ENCODE measurements at regions of chr12 and their contacts with region 1.

Region 1: DNA sequence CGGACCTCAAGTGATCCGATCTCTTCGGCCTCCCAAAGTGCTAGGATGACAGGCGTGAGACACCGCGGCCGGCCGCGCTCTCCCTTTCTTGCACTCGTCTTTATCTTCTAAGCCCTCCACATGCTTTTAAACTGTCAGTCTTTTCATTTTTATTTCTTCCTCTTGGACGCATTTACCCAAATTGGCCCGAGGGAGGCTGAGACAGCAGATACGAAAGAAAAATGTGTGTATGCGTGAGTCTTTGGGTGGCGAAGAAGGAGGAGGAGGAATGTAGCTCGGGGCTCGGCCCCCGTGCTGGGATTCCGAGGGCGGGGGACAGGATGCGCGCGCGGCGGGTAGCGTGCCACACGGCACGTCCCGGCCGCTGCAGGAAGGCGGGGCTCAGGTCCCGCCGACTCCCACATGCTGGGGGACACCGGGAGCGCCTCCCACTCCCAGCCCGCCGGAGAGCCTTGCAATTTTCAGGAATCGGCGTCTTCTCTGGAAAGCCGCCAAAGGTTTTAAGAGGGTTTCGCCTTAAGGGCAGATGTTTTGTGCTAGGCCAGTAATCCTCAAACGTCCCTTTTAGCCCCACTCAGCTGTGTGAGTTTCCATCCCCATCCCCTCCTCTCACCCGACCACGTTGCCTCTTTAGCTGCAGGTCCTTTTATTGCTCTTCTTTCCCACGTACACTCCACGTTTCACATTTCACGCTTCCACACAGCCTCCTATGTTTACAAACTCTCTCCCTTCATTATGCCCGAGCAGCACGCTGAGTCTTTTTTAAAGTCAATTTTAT is 34.7 kb upstream of the SLC2A3 start:
- DNase-seq: peak; percentile 92
- H3K4me3 Mint-ChIP-seq: peak overlapping the region; percentile 79
- H3K27ac Mint-ChIP-seq: peak overlapping the region; percentile 97
- H3K4me1 Mint-ChIP-seq: peaks cover 32% of the 10 kb centered on the region
- H3K27me3 Mint-ChIP-seq: no peaks in the 10 kb centered on the region

Region 2: DNA sequence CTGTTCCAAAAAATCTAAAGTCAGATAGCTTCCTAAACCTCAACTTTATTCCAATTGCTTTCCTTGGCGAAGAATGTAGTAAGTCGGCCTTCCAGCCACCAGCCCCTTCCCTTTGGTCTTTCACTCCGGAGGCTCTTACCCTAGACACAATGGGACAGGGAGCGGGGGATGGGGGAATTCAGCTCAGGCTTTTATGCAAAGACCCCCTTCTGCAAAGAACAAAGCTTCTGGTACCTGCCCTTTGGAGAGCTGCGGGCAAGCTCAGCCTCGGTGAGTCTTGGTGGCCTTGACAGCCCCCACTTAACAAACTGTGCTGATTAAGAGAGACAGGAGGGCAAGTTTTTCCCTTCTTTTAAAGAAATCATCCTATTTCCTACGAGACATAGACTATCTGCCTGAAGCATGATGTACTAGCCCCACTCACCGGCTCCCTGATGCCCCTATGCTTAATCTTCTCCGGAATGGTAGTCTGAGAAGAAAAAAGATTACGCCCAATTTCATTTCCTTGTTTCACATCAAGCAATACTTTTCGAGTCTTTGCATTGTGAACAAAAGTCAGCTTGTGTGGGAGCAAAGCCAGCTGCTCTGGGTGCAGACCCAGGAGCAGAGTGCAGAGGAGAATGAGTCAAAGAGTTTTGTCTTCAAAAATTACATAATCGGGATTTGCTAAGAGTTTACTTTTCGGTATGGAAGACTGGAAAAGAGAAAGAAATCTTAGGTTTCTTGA is 182.9 kb before region 1 on chr12:
- CTCF ChIA-PET with region 1: no interaction called
- intact Hi-C with region 1: no loop called
- DNase-seq: no peak
- H3K4me3 Mint-ChIP-seq: no peak overlapping the region
- H3K27ac Mint-ChIP-seq: no peak overlapping the region
- H3K4me1 Mint-ChIP-seq: no peaks in the 10 kb centered on the region
- H3K27me3 Mint-ChIP-seq: peaks cover 2% of the 10 kb centered on the region

Region 3: GRCh38 chr12:7959701-7960121 is 11.0 kb before region 1 on chr12:
- CTCF ChIA-PET with region 1: interaction called, 24 read pairs
- intact Hi-C with region 1: loop called (anchors 1 kb)
- DNase-seq: peak; percentile 68
- H3K4me3 Mint-ChIP-seq: peak overlapping the region; percentile 86
- H3K27ac Mint-ChIP-seq: peak overlapping the region; percentile 93
- H3K4me1 Mint-ChIP-seq: peaks cover 37% of the 10 kb centered on the region
- H3K27me3 Mint-ChIP-seq: no peaks in the 10 kb centered on the region

Region 4: DNA sequence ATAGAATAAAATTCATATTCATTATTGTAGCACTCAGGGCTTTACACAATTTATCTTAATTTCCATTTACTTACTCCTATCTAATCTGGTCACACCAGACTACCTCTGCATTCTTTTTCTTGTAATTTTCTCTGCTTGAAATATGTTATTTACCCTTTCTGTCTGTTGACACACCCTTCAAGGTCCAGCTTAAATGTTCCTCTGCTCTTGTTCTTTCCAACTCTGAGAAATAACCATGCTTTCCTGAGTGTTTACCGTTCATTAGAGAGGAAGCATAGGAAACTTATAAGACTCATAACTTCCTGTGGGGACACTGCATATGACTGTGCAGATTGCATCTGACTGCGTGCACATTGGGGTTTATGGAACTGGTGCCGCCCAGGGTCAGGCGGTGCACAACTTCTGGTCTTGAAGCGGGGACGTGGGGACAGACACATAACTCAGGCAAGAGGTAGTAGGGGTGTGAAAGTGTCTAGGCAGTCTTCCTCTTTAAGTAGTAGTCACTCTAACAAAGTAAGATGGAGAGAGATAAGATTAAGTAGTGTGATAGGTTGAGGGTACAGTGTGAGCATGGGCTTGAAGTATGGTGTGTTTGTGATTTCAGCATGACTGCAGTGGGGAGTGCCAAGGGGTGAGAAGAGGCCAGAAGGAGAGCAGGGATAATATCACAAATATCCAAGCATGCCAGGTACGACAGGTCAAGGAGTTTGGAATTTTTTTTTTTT is 19.3 kb after region 1 on chr12:
- CTCF ChIA-PET with region 1: interaction called, 7 read pairs
- intact Hi-C with region 1: loop called (anchors 1 kb)
- DNase-seq: peak; percentile 84
- H3K4me3 Mint-ChIP-seq: peak overlapping the region; percentile 41
- H3K27ac Mint-ChIP-seq: peak overlapping the region; percentile 82
- H3K4me1 Mint-ChIP-seq: peaks cover 26% of the 10 kb centered on the region
- H3K27me3 Mint-ChIP-seq: no peaks in the 10 kb centered on the region

Region 5: DNA sequence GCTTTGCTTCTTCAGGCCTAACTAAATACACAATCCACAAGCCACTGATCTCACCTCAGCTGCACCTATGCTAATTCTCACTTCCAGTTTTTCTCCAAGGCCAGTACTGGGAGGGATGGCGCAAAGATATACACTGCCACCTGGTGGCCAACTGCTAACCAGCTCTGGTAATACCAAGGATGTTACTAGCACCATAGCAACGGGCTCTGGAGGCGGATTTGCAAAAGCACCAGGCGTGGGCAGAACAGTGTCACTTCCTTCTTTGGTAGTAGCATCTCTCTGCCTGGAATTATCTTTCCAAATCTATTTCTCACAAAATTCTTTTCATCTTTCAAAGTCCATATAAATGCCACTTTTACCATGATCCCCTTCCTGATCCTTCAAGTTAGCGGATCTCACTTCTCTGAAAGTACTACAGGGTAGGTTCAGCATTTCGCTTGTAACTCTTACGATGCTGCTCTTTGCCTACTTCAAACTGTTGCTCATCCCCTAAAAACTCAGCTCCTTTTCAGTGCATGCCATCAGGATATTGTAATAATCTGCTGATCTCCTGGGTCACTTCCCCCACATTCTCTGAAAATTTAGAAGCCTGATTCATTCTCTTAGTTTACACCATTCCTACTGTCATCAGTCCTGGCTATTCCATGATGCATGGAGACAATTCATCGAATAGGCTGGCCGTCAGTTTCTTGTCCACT is 24.8 kb after region 1 on chr12:
- CTCF ChIA-PET with region 1: interaction called, 7 read pairs
- intact Hi-C with region 1: loop called (anchors 1 kb)
- DNase-seq: peak; percentile 95
- H3K4me3 Mint-ChIP-seq: no peak overlapping the region
- H3K27ac Mint-ChIP-seq: no peak overlapping the region
- H3K4me1 Mint-ChIP-seq: peaks cover 13% of the 10 kb centered on the region
- H3K27me3 Mint-ChIP-seq: no peaks in the 10 kb centered on the region

Region 6: GRCh38 chr12:8026291-8026900 is 55.7 kb after region 1 on chr12:
- CTCF ChIA-PET with region 1: no interaction called
- intact Hi-C with region 1: loop called (anchors 1 kb)
- DNase-seq: peak; percentile 99
- H3K4me3 Mint-ChIP-seq: peak overlapping the region; percentile 94
- H3K27ac Mint-ChIP-seq: peak overlapping the region; percentile 100
- H3K4me1 Mint-ChIP-seq: peaks cover 11% of the 10 kb centered on the region
- H3K27me3 Mint-ChIP-seq: no peaks in the 10 kb centered on the region

Region 7: DNA sequence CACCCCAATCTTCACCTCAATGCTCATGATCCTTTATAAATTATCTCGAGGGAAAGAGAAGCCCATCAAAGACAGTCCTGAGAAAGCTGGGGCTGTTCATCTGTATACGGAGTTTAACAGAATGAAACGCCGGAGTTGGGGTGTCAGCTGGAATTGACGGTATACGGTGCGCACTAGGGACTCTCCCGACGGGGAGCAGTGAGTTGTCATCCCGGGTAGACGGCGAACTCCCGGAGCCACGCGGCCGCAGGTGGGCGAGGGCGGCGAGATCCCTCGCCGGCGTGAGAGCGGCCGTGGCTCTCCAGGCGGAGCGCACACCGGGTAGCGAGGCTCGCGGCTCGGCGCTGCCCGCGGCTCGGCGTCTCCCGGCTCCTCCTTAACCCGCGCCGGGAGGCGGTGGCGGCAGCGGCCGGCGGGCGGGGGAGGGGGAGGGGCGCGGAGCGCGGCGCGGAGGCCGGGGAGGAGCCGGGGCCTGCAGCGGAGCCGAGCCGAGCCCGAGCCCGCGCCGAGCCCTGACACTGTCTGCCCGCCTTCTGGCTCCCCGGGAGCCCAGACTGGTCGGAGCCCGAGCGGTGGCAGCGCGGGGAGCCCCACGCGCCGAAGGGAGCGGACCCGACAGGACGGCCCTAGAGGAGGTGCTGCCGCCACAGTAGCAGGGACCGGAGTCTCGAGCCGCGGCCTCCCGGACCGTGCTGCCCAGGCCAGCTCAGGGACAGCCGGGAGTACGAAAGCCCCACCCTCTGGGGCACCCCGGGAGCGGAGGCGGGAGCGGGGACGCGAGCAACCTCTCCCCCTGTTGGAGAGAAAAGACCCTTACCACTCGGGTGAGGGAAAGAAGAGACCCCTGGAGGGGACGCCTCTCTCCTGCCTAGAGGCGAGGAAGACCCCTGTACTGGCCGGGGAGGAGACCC is 61.8 kb after region 1 on chr12 and contains the start of gene FOXJ2:
- CTCF ChIA-PET with region 1: no interaction called
- intact Hi-C with region 1: loop called (anchors 1 kb)
- DNase-seq: peak; percentile 72
- H3K4me3 Mint-ChIP-seq: peak within 1 kb of the TSS; percentile 82
- H3K27ac Mint-ChIP-seq: peak within 1 kb of the TSS; percentile 86
- H3K4me1 Mint-ChIP-seq: peaks cover 51% of the 10 kb centered on the region
- H3K27me3 Mint-ChIP-seq: no peaks in the 10 kb centered on the region
- total RNA-seq, gene FOXJ2: 17.6 to 17.7 TPM